Dorsolateral prefrontal cortex (tissue), 120 donors: ENCODE measurements at regions of chr6 and their contacts with region 1.

Region 1: GRCh38 chr6:70686548-70687133 is 19.0 kb downstream of the SMAP1 start:
- DNase-seq: no peak
- H3K4me3 ChIP-seq: no peak overlapping the region
- H3K27ac ChIP-seq: no peak overlapping the region
- H3K27me3 ChIP-seq: no peaks in the 10 kb centered on the region
- CTCF ChIP-seq: peak; percentile 74 to 97 (median 86)

Region 2: DNA sequence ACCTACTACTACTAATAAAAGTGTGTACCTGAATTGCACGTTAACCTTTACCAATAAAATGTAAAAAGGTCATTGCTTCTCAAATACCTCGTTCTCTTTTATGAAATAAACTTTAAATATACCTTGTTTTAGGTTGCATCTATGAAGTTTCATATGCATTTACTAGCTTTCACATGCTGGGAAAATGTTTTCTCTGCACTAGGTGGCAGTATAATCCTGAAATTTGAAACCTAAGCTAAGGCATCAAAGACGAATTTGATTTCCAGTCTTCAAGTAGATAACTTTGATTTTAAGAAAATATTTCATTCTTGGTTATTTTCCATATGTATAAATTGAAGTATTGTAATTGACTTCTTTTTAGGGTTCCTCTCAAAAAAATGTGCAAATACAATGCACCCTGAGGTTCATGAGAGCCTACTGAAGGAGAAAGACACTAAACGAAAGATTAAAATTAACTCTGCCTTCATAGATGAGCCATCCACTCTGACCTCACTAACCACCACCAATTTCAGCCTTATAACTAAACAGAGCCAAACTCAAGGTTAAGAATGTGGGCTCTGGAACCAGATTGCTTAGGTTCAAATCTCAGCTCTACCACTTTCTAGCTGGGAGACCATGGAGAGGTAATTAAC is 376.5 kb before region 1 on chr6:
- intact Hi-C with region 1: loop called in 1 of 2 experiments (anchors 5 kb)
- DNase-seq: no peak
- H3K4me3 ChIP-seq: no peak overlapping the region
- H3K27ac ChIP-seq: no peak overlapping the region
- H3K27me3 ChIP-seq: peaks cover 0 to 9% (median 0%) of the 10 kb centered on the region in 45 donors
- CTCF ChIP-seq: peak; percentile 59 to 91 (median 77)